OCI-LY7 (cell line): ENCODE measurements at regions of chr11 and their contacts with region 1.

Region 1: DNA sequence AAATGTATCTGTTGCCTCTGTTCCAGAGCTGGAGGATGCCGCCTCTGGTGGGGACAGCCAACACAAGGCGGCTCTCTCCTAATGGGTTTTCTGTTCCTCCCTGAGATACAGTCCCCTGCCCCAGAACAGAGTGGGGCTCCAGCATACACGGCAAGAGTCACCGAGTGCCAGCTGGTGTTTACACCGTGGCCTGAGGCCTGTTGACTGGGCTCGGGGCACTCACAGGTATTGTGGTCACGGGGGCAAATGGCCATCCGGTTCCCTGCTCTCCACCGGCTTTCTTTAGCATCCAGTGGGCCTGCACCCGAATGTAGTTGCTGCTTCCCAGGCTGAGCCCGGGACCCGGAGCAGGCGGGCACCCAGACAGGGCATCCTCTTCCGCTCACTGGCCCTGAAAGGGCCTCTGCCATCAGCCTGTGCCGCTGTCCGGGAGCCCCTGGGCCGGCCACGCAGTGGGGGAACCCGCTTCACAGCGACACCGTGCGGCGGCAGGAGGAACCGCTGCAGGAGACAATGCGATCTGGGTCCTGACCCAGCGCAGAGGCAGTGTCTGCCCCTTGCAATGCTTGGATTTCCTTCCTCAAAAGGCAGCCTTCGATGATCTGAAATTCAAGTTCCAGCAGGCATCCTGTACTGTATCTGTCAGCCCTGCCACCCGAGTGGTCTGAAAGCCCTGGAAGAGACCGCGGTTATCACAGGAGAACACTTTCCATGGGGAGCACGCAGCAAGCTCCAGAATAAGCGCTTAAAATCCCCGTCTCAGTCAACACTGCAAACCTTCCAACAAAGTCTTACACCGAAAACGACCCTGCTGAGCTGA is 859 bp upstream of the KRTAP5-5 start:
- DNase-seq: peak; percentile 43
- H3K4me3 ChIP-seq: no peak overlapping the region
- H3K27ac ChIP-seq: no peak overlapping the region
- H3K4me1 ChIP-seq: no peaks in the 10 kb centered on the region
- CTCF ChIP-seq: peak; percentile 87

Region 2: GRCh38 chr11:1598816-1599215 is 29.9 kb before region 1 on chr11:
- CTCF ChIA-PET with region 1: no interaction called
- POLR2A ChIA-PET with region 1: no interaction called
- intact Hi-C with region 1: loop called (anchors 2 kb)
- DNase-seq: no peak
- H3K4me3 ChIP-seq: no peak overlapping the region
- H3K27ac ChIP-seq: no peak overlapping the region
- H3K4me1 ChIP-seq: no peaks in the 10 kb centered on the region
- CTCF ChIP-seq: no peak

Region 3: GRCh38 chr11:1674173-1675131 is 45.7 kb after region 1 on chr11:
- CTCF ChIA-PET with region 1: no interaction called
- POLR2A ChIA-PET with region 1: no interaction called
- intact Hi-C with region 1: no loop called
- DNase-seq: no peak
- H3K4me3 ChIP-seq: no peak overlapping the region
- H3K27ac ChIP-seq: no peak overlapping the region
- H3K4me1 ChIP-seq: no peaks in the 10 kb centered on the region
- CTCF ChIP-seq: no peak

Region 4: DNA sequence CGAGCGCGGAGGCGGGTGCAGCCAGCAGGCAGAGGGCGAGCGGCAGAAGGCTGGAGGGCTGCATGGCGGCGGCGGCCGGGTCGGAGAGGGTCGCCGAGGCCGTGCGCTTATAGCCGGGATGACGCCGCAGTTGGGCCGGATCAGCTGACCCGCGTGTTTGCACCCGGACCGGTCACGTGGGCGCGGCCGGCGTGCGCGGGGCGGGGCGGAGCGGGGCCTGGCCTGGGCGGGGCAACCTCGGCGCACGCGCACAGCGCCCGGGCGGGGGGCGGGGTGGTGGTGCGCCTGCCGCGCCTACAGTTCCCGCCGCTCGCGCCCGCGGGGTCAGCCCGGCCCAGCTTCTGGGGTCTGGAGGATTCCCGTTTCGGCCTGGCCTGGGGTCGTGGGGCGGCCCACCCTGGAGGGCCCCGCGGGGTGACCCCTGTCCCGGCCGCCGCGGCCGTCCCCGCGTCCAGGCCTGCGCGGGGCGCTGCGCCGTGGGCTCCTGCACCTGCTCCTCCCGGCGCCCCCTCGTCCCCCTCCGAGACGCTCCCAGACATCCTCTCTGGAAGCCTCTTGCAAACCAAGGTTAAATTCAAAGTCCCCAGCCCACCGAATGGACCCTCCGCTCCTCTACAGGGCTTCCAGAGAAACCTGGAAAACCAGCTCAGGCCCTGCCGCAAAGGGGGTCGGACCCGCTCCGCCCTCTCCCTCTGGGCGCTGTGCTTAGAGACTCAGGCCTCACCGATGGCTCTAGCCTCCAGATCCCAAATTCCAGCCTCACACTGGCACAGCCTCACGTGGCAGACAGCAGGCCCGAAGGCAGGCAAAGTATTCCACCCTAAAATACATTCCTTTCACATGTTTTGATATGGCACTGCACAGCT is 135.3 kb after region 1 on chr11 and contains the start of gene CTSD:
- CTCF ChIA-PET with region 1: no interaction called
- POLR2A ChIA-PET with region 1: no interaction called
- intact Hi-C with region 1: no loop called
- DNase-seq: peak; percentile 88
- H3K4me3 ChIP-seq: peak within 1 kb of the TSS; percentile 99
- H3K27ac ChIP-seq: no peak within 1 kb of the TSS
- H3K4me1 ChIP-seq: peaks cover 15% of the 10 kb centered on the region
- CTCF ChIP-seq: peak; percentile 43
- total RNA-seq, gene CTSD: 27.7 and 31.7 TPM in 2 replicates